B cell (primary cell): ENCODE measurements at regions of chr12 and their contacts with region 1.

Region 1: DNA sequence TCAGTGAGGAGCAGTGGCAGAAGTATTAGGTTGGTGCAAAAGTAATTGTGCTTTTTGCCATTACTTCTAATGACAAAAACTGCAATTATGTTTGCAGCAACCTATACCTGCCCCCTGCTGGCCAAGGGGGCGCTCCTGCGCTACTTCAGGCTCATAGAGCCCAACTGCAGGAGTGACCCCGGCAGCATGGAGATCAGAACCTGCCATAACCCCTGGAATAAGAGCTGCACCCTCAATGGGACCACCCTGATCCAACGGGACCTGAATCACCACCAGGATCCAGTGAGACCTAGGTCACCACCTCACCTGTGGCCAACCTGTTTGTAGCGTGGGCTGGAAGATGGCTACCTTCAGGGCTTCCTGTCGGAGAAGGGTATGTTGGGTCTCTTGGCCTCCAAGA is 8.2 kb upstream of the C12orf42 start:
- DNase-seq: peak; percentile 83
- ATAC-seq: peak; percentile 37
- H3K4me3 ChIP-seq: no peak overlapping the region
- H3K4me3 Mint-ChIP-seq: no peak overlapping the region
- H3K27ac ChIP-seq: no peak overlapping the region
- H3K27ac Mint-ChIP-seq: peak overlapping the region; percentile 59
- H3K4me1 ChIP-seq: peaks cover 0 to 5% of the 10 kb centered on the region in 2 donors
- H3K4me1 Mint-ChIP-seq: peaks cover 44% of the 10 kb centered on the region
- H3K27me3 ChIP-seq: peaks cover 0 to 4% (median 0%) of the 10 kb centered on the region in 4 experiments
- H3K27me3 Mint-ChIP-seq: no peaks in the 10 kb centered on the region
- CTCF ChIP-seq: peak; percentile 89

Region 2: GRCh38 chr12:102883204-102883799 is 620.7 kb before region 1 on chr12:
- CTCF ChIA-PET with region 1: interaction called, 5 read pairs
- POLR2A ChIA-PET with region 1: no interaction called
- intact Hi-C with region 1: loop called (anchors 1 kb)
- DNase-seq: peak; percentile 53
- ATAC-seq: peak; percentile 54
- H3K4me3 ChIP-seq: no peak overlapping the region
- H3K4me3 Mint-ChIP-seq: no peak overlapping the region
- H3K27ac ChIP-seq: no peak overlapping the region
- H3K27ac Mint-ChIP-seq: no peak overlapping the region
- H3K4me1 ChIP-seq: peaks cover 0 to 3% of the 10 kb centered on the region in 2 donors
- H3K4me1 Mint-ChIP-seq: peaks cover 4% of the 10 kb centered on the region
- H3K27me3 ChIP-seq: peaks cover 0 to 6% (median 2%) of the 10 kb centered on the region in 4 experiments
- H3K27me3 Mint-ChIP-seq: peaks cover 38% of the 10 kb centered on the region
- CTCF ChIP-seq: peak; percentile 88

Region 3: GRCh38 chr12:102948941-102949352 is 555.0 kb before region 1 on chr12:
- CTCF ChIA-PET with region 1: interaction called, 86 read pairs
- POLR2A ChIA-PET with region 1: no interaction called
- intact Hi-C with region 1: loop called (anchors 1 kb)
- DNase-seq: peak; percentile 72
- ATAC-seq: peak; percentile 57
- H3K4me3 ChIP-seq: no peak overlapping the region
- H3K4me3 Mint-ChIP-seq: no peak overlapping the region
- H3K27ac ChIP-seq: no peak overlapping the region
- H3K27ac Mint-ChIP-seq: no peak overlapping the region
- H3K4me1 ChIP-seq: peaks cover 10 to 13% of the 10 kb centered on the region in 2 donors
- H3K4me1 Mint-ChIP-seq: peaks cover 9% of the 10 kb centered on the region
- H3K27me3 ChIP-seq: peaks cover 0 to 41% (median 24%) of the 10 kb centered on the region in 4 experiments
- H3K27me3 Mint-ChIP-seq: peaks cover 57% of the 10 kb centered on the region
- CTCF ChIP-seq: peak; percentile 99

Region 4: GRCh38 chr12:103114296-103115055 is 389.5 kb before region 1 on chr12:
- CTCF ChIA-PET with region 1: no interaction called
- POLR2A ChIA-PET with region 1: no interaction called
- intact Hi-C with region 1: loop called (anchors 5 kb)
- DNase-seq: peak; percentile 59
- ATAC-seq: peak; percentile 91
- H3K4me3 ChIP-seq: no peak overlapping the region
- H3K4me3 Mint-ChIP-seq: no peak overlapping the region
- H3K27ac ChIP-seq: no peak overlapping the region
- H3K27ac Mint-ChIP-seq: peak overlapping the region; percentile 20
- H3K4me1 ChIP-seq: peaks cover 10% of the 10 kb centered on the region in 2 donors
- H3K4me1 Mint-ChIP-seq: peaks cover 18% of the 10 kb centered on the region
- H3K27me3 ChIP-seq: no peaks in the 10 kb centered on the region
- H3K27me3 Mint-ChIP-seq: no peaks in the 10 kb centered on the region
- CTCF ChIP-seq: no peak

Region 5: DNA sequence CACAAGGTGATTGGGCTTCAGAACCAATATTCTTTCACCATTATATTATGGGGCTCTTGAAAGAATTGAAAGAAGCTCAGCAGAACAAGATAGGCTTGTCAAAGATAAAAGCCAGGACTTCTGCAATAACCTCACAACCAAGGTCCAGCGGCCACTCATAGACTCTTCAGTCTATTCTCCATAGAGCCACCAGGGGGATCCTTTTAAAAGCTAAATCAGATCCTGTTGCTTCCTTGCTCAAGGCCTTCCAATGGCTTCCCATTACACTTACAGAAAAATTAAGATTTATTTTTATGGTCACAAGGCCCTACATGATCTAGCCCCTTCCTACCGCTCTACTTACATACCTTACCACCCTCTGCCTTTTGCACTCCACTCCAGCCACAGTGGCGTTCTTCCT is 177.8 kb before region 1 on chr12:
- CTCF ChIA-PET with region 1: interaction called, 29 read pairs
- POLR2A ChIA-PET with region 1: no interaction called
- intact Hi-C with region 1: loop called (anchors 1 kb)
- DNase-seq: peak; percentile 36
- ATAC-seq: no peak
- H3K4me3 ChIP-seq: no peak overlapping the region
- H3K4me3 Mint-ChIP-seq: no peak overlapping the region
- H3K27ac ChIP-seq: no peak overlapping the region
- H3K27ac Mint-ChIP-seq: no peak overlapping the region
- H3K4me1 ChIP-seq: no peaks in the 10 kb centered on the region
- H3K4me1 Mint-ChIP-seq: no peaks in the 10 kb centered on the region
- H3K27me3 ChIP-seq: no peaks in the 10 kb centered on the region
- H3K27me3 Mint-ChIP-seq: no peaks in the 10 kb centered on the region
- CTCF ChIP-seq: peak; percentile 53

Region 6: DNA sequence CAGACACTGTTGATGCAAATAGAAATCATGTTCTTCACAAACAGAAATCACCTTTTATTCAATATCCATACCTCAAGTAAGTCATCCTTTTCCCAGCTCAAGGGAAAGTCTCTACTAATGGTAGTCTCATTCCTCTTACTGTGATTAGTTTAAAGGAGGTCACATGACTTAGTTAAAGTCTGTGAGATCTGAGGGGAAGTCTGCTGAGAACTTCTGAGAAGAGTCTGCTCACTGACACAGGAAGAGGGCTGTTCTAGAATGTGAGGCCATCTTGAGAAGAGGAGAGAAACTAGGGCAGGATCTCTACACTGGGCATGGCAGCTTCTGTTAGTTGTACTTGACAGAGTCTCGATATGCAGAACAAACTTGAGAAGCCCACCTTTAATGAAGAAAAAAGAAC is 155.0 kb before region 1 on chr12:
- CTCF ChIA-PET with region 1: no interaction called
- POLR2A ChIA-PET with region 1: no interaction called
- intact Hi-C with region 1: no loop called
- DNase-seq: no peak
- ATAC-seq: no peak
- H3K4me3 ChIP-seq: no peak overlapping the region
- H3K4me3 Mint-ChIP-seq: no peak overlapping the region
- H3K27ac ChIP-seq: peak overlapping the region in 1 of 2 donors; percentile 1
- H3K27ac Mint-ChIP-seq: no peak overlapping the region
- H3K4me1 ChIP-seq: no peaks in the 10 kb centered on the region
- H3K4me1 Mint-ChIP-seq: peaks cover 21% of the 10 kb centered on the region
- H3K27me3 ChIP-seq: no peaks in the 10 kb centered on the region
- H3K27me3 Mint-ChIP-seq: no peaks in the 10 kb centered on the region
- CTCF ChIP-seq: no peak

Region 7: GRCh38 chr12:103401421-103401820 is 102.6 kb before region 1 on chr12:
- CTCF ChIA-PET with region 1: interaction called, 30 read pairs
- POLR2A ChIA-PET with region 1: no interaction called
- intact Hi-C with region 1: loop called (anchors 2 kb)
- DNase-seq: peak; percentile 18
- ATAC-seq: peak; percentile 28
- H3K4me3 ChIP-seq: no peak overlapping the region
- H3K4me3 Mint-ChIP-seq: no peak overlapping the region
- H3K27ac ChIP-seq: no peak overlapping the region
- H3K27ac Mint-ChIP-seq: no peak overlapping the region
- H3K4me1 ChIP-seq: peaks cover 5 to 7% of the 10 kb centered on the region in 2 donors
- H3K4me1 Mint-ChIP-seq: peaks cover 19% of the 10 kb centered on the region
- H3K27me3 ChIP-seq: no peaks in the 10 kb centered on the region
- H3K27me3 Mint-ChIP-seq: no peaks in the 10 kb centered on the region
- CTCF ChIP-seq: no peak

Region 8: GRCh38 chr12:103431956-103432355 is 72.0 kb before region 1 on chr12:
- CTCF ChIA-PET with region 1: no interaction called
- POLR2A ChIA-PET with region 1: no interaction called
- intact Hi-C with region 1: no loop called
- DNase-seq: no peak
- ATAC-seq: no peak
- H3K4me3 ChIP-seq: no peak overlapping the region
- H3K4me3 Mint-ChIP-seq: no peak overlapping the region
- H3K27ac ChIP-seq: peak overlapping the region in 1 of 2 donors; percentile 35
- H3K27ac Mint-ChIP-seq: peak overlapping the region; percentile 42
- H3K4me1 ChIP-seq: peaks cover 6 to 8% of the 10 kb centered on the region in 2 donors
- H3K4me1 Mint-ChIP-seq: peaks cover 58% of the 10 kb centered on the region
- H3K27me3 ChIP-seq: no peaks in the 10 kb centered on the region
- H3K27me3 Mint-ChIP-seq: no peaks in the 10 kb centered on the region
- CTCF ChIP-seq: no peak